ENCODE measurements at regions of chr3 and their contacts with region 1.

Region 1: GRCh38 chr3:19946832-19947548 is at the start of gene RAB5A:
- DNase-seq: peak; percentile 98 to 99
- H3K4me3 ChIP-seq: peak within 1 kb of the TSS; percentile 86 to 92
- H3K27ac ChIP-seq: peak within 1 kb of the TSS; percentile 97 to 99
- H3K4me1 ChIP-seq: peaks cover 0 to 44% (median 27%) of the 10 kb centered on the region in 4 donors
- H3K27me3 ChIP-seq: no peaks in the 10 kb centered on the region
- CTCF ChIP-seq: no peak

Region 2: GRCh38 chr3:19885468-19885867 is 61.5 kb before region 1 on chr3:
- intact Hi-C with region 1: loop called (anchors 5 kb)
- DNase-seq: no peak
- H3K4me3 ChIP-seq: no peak overlapping the region
- H3K27ac ChIP-seq: no peak overlapping the region
- H3K4me1 ChIP-seq: peaks cover 0 to 16% (median 11%) of the 10 kb centered on the region in 4 donors
- H3K27me3 ChIP-seq: no peaks in the 10 kb centered on the region
- CTCF ChIP-seq: peak; percentile 25 to 46

Region 3: GRCh38 chr3:20039766-20040475 is 92.9 kb after region 1 on chr3 and contains the start of gene KAT2B:
- intact Hi-C with region 1: loop called (anchors 5 kb)
- DNase-seq: peak; percentile 76 to 89
- H3K4me3 ChIP-seq: peak within 1 kb of the TSS; percentile 72 to 88
- H3K27ac ChIP-seq: peak within 1 kb of the TSS; percentile 97 to 98
- H3K4me1 ChIP-seq: peaks cover 4 to 42% (median 27%) of the 10 kb centered on the region in 4 donors
- H3K27me3 ChIP-seq: no peaks in the 10 kb centered on the region
- CTCF ChIP-seq: peak; percentile 56 to 83

Region 4: GRCh38 chr3:20185701-20186598 is 239.0 kb after region 1 on chr3 and contains the start of gene SGO1:
- intact Hi-C with region 1: loop called (anchors 2 kb)
- DNase-seq: peak; percentile 99
- H3K4me3 ChIP-seq: peak within 1 kb of the TSS; percentile 64 to 77
- H3K27ac ChIP-seq: peak within 1 kb of the TSS; percentile 92 to 93
- H3K4me1 ChIP-seq: peaks cover 0 to 16% (median 4%) of the 10 kb centered on the region in 4 donors
- H3K27me3 ChIP-seq: no peaks in the 10 kb centered on the region
- CTCF ChIP-seq: no peak

Region 5: GRCh38 chr3:21017115-21017852 is 1070.3 kb after region 1 on chr3:
- intact Hi-C with region 1: no loop called
- DNase-seq: no peak
- H3K4me3 ChIP-seq: no peak overlapping the region
- H3K27ac ChIP-seq: no peak overlapping the region
- H3K4me1 ChIP-seq: no peaks in the 10 kb centered on the region
- H3K27me3 ChIP-seq: no peaks in the 10 kb centered on the region
- CTCF ChIP-seq: no peak